ENCODE measurements at regions of chr4 and their contacts with region 1.

Region 1: DNA sequence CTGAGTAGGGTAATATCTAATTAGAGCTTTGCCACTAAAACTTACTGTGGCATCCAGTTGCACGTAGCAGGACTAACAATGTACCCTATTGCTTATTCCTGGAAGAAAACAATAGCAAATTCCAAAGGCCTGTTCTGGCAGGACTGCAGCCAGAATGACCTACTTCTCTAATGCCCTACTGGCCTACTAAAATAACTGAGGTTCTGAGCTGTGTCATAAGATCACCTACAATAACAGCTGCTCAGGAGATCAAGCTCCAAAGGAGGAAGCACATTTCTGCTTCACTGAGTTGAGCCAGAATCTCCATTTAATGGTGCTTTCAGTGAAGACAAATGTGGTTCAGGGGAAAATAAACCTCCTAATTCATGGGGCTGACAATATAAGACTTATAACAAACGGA is 42.2 kb upstream of the CXCL8 start:
- DNase-seq: peak; percentile 87
- H3K4me3 ChIP-seq: no peak overlapping the region
- H3K27ac ChIP-seq: no peak overlapping the region
- H3K4me1 ChIP-seq: peaks cover 30% of the 10 kb centered on the region
- H3K27me3 ChIP-seq: no peaks in the 10 kb centered on the region
- CTCF ChIP-seq: no peak

Region 2: GRCh38 chr4:73741031-73741749 is 43.0 kb after region 1 on chr4:
- CTCF ChIA-PET with region 1: interaction called, 11 read pairs
- dilution Hi-C with region 1: no loop called
- in situ Hi-C with region 1: no loop called
- intact Hi-C with region 1: no loop called
- DNase-seq: peak; percentile 27
- H3K4me3 ChIP-seq: peak overlapping the region in 2 of 3 experiments; percentile 0 to 34
- H3K27ac ChIP-seq: peak overlapping the region; percentile 55
- H3K4me1 ChIP-seq: peaks cover 19% of the 10 kb centered on the region
- H3K27me3 ChIP-seq: no peaks in the 10 kb centered on the region
- CTCF ChIP-seq: no peak